ENCODE measurements at regions of chr12 and their contacts with region 1.

Region 1: GRCh38 chr12:104286538-104287482 is 16.7 kb upstream of the EID3 start:
- DNase-seq: peak; percentile 70 to 98 (median 81)
- ATAC-seq: peak; percentile 89
- H3K4me3 ChIP-seq: peak overlapping the region; percentile 56
- H3K27ac ChIP-seq: peak overlapping the region; percentile 98
- H3K4me1 ChIP-seq: peaks cover 5 to 20% of the 10 kb centered on the region in 2 experiments; a peak in 4 of 5 replicates
- H3K27me3 ChIP-seq: no peaks in the 10 kb centered on the region
- CTCF ChIP-seq: no peak
- EP300 ChIP-seq: peak; percentile 68
- POLR2A ChIP-seq: peak; percentile 99
- RAD21 ChIP-seq: no peak; a peak in 1 of 4 replicates

Region 2: DNA sequence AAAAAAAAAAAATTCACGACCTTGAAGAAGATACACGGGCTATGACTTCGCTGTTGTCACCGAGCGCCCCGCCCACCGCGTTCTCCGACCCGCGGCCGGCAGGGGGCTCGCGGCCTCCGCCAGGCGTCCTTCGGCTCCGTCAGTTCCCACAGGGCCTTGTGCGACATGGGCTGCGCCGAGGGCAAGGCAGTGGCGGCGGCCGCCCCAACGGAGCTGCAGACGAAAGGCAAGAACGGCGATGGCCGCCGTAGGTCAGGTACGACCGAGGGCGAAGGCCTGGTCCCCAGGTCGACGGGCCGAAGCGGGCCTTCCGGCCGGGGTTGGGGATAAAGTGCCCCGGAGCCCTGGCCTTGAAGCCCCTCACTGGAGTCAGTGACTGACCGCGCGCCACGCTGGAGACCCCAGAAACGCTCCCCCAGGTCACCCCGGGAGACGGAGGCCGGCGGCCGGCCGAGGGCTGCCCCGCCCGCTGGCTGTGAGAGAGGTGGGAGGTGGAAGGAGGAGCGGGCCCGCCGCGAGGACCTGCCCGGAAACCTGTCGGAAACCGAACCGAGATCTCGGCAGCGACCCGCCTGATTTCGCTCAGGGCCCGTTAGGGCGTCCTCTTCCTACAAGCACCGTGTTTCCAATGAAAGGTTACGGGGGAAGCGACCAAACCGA is 71.0 kb before region 1 on chr12 and contains the start of gene TXNRD1:
- CTCF ChIA-PET with region 1: interaction called, 3 read pairs
- POLR2A ChIA-PET with region 1: interaction called, 67 read pairs
- in situ Hi-C with region 1: loop called (anchors 10 kb)
- intact Hi-C with region 1: loop called (anchors 1 kb)
- DNase-seq: peak; percentile 84 to 90 (median 86)
- ATAC-seq: peak; percentile 99
- H3K4me3 ChIP-seq: peak within 1 kb of the TSS; percentile 20
- H3K27ac ChIP-seq: peak within 1 kb of the TSS; percentile 13; the same call in 1 of the 3 replicates
- H3K4me1 ChIP-seq: peaks cover 11% of the 10 kb centered on the region in 2 experiments; a peak in 4 of 5 replicates
- H3K27me3 ChIP-seq: no peaks in the 10 kb centered on the region; a peak in 1 of 5 replicates
- CTCF ChIP-seq: peak; percentile 92 to 94 (median 93)
- EP300 ChIP-seq: no peak
- POLR2A ChIP-seq: 0 out of 2 replicates have a peak, but pooled peaks have one; percentile 51
- RAD21 ChIP-seq: peak; percentile 90 to 94
- polyA plus RNA-seq, gene TXNRD1: 114 to 189 TPM

Region 3: DNA sequence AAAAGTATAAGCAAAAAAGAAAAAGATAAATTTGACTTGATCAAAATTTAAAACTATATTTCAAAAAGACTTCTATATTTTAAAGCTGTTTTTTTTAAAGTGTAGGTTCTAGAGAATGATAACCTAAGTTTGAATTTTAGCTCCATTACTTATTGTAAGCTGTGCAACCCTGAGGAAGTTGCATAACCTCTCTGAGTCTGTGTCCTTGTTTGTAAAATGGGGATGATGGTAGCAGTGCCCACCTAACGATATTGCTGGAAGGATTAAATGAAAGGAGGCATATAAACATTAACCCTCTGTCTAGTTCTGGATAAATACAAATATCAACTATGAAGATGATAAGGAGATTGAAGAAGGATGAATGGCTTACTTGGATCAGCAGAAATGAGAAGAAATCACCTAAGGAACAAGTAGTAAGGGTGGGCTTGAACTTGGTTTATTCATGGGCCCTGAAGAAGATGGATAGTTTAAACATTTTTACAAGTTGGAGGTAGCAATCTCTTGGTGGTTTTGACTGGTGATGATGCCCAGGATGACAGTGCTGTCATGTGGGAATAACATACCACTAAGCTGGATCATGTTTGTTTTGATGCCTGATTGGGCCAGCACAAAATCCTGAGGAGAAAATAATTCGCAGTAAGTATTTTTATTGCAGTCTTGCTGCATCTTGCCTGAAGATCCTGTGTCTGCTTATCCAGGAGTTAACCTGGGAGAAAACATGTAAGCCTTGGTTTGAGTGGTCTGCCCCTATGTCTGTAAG is 36.3 kb before region 1 on chr12:
- CTCF ChIA-PET with region 1: no interaction called
- POLR2A ChIA-PET with region 1: interaction called, 28 read pairs
- in situ Hi-C with region 1: no loop called
- intact Hi-C with region 1: loop called (anchors 5 kb)
- DNase-seq: no peak
- ATAC-seq: no peak
- H3K4me3 ChIP-seq: no peak overlapping the region
- H3K27ac ChIP-seq: no peak overlapping the region; the same call in 2 of the 3 replicates
- H3K4me1 ChIP-seq: peaks cover 4 to 6% of the 10 kb centered on the region in 2 experiments; a peak in 3 of 5 replicates
- H3K27me3 ChIP-seq: no peaks in the 10 kb centered on the region
- CTCF ChIP-seq: no peak
- EP300 ChIP-seq: no peak
- POLR2A ChIP-seq: no peak
- RAD21 ChIP-seq: no peak

Region 4: DNA sequence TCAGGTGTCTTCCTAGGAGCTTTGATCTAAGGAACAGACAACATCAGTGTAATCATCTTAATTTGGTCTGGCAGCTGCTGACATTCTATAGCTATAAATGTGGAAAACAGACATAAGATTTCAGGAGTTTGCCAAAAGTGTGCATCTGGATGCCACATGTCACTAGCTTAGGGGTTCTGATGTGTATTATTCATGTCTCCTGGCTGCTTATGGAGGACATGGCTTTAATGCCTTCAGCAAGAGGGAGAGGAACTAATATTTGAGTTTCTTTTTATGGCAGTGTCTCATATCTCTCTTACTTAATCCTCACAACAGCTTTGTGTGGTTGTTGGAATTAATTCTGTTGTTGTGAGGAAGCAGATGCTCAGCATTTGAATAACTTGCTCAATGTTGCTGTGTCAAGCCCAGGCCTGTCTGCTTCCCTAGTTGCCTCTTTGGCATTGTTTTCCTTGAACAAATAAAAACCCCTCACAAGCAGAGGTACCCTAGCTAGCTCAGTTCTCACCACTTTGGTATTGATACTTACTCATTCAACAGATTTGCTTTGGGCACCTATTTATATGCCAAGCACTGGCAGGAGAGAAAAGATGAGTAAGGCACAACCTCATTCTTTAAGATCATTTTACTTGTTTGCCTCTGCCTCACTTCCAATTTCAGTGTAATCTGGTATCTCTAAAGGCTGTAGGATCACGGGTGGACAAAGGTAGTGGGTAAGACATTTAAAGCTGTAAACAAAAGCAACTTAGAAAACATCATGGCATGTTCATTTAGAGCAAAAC is 23.0 kb before region 1 on chr12:
- CTCF ChIA-PET with region 1: no interaction called
- POLR2A ChIA-PET with region 1: interaction called, 10 read pairs
- in situ Hi-C with region 1: no loop called
- intact Hi-C with region 1: no loop called
- DNase-seq: no peak
- ATAC-seq: no peak
- H3K4me3 ChIP-seq: no peak overlapping the region
- H3K27ac ChIP-seq: no peak overlapping the region
- H3K4me1 ChIP-seq: no peaks in the 10 kb centered on the region
- H3K27me3 ChIP-seq: no peaks in the 10 kb centered on the region
- CTCF ChIP-seq: no peak
- EP300 ChIP-seq: no peak
- POLR2A ChIP-seq: no peak
- RAD21 ChIP-seq: no peak

Region 5: GRCh38 chr12:104303538-104304151 is 16.8 kb after region 1 on chr12 and contains the start of gene EID3:
- CTCF ChIA-PET with region 1: no interaction called
- POLR2A ChIA-PET with region 1: interaction called, 104 read pairs
- in situ Hi-C with region 1: no loop called
- intact Hi-C with region 1: no loop called
- DNase-seq: peak in 2 of 4 experiments; percentile 44 to 50
- ATAC-seq: no peak; the same call in 2 of the 3 replicates
- H3K4me3 ChIP-seq: no peak within 1 kb of the TSS
- H3K27ac ChIP-seq: no peak within 1 kb of the TSS
- H3K4me1 ChIP-seq: peaks cover 0 to 4% of the 10 kb centered on the region in 2 experiments; a peak in 2 of 5 replicates
- H3K27me3 ChIP-seq: no peaks in the 10 kb centered on the region
- CTCF ChIP-seq: no peak
- EP300 ChIP-seq: no peak
- POLR2A ChIP-seq: no peak
- RAD21 ChIP-seq: no peak
- polyA plus RNA-seq, gene EID3: 0.07 to 0.21 TPM

Region 6: GRCh38 chr12:104376650-104377541 is 90.1 kb after region 1 on chr12:
- CTCF ChIA-PET with region 1: no interaction called
- POLR2A ChIA-PET with region 1: no interaction called
- in situ Hi-C with region 1: no loop called
- intact Hi-C with region 1: no loop called
- DNase-seq: no peak
- ATAC-seq: no peak
- H3K4me3 ChIP-seq: no peak overlapping the region
- H3K27ac ChIP-seq: no peak overlapping the region
- H3K4me1 ChIP-seq: peaks cover 2 to 3% of the 10 kb centered on the region in 2 experiments; a peak in 2 of 5 replicates
- H3K27me3 ChIP-seq: peaks cover 0 to 9% of the 10 kb centered on the region in 2 experiments; a peak in 2 of 5 replicates
- CTCF ChIP-seq: no peak
- EP300 ChIP-seq: no peak
- POLR2A ChIP-seq: no peak
- RAD21 ChIP-seq: no peak

Region 7: DNA sequence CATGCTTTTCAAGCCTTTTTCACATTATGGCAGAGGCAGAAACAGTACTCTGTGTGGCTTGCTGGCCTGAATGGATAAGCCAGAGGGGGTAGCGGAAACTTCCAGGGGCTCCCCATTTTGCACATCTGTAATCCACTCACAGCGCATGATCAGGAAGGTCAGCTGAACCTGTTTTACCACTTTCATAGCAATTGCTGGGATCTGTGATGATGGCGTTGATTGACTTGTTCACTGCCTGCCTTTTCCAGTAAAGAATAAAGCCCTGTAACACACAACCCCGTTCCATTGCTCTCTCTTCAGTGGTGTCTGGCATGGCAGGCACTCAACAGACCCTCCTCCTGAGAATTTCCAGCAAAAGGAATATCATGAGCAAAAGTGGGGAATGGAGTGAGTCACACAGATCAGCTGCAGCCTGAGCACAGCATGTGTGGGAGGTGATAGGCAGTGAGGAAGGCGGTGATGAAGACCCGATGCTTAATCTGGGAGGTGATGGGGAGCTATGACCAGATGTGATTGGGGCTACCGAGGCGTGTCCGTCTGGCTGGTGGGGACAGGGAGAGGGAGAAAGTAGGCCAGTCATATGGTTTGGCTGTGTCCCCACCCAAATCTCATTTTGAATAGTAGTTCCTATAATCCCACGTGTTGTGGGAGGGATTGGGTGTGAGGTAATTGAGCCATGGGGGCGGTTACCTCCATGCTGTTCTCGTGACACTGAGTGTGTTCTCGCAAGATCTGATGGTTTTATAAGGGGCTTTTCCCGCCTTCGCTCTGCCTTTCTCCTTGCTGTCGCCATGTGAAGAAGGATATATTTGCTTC is 125.2 kb after region 1 on chr12:
- CTCF ChIA-PET with region 1: no interaction called
- POLR2A ChIA-PET with region 1: no interaction called
- in situ Hi-C with region 1: no loop called
- intact Hi-C with region 1: no loop called
- DNase-seq: peak; percentile 27 to 45 (median 37)
- ATAC-seq: no peak; the same call in 2 of the 3 replicates
- H3K4me3 ChIP-seq: no peak overlapping the region
- H3K27ac ChIP-seq: no peak overlapping the region
- H3K4me1 ChIP-seq: peaks cover 14% of the 10 kb centered on the region in 2 experiments; a peak in 3 of 5 replicates
- H3K27me3 ChIP-seq: no peaks in the 10 kb centered on the region; a peak in 1 of 5 replicates
- CTCF ChIP-seq: no peak
- EP300 ChIP-seq: no peak
- POLR2A ChIP-seq: no peak
- RAD21 ChIP-seq: no peak